Naive thymus-derived CD4-positive, alpha-beta T cell (primary cell): ENCODE measurements at regions of chr10 and their contacts with region 1.

Region 1: GRCh38 chr10:88152720-88153119 is 289.3 kb downstream of the PTEN start:
- DNase-seq: peak in 5 of 9 donors; percentile 3 to 38 (median 10)
- ATAC-seq: peak; percentile 66
- H3K4me3 ChIP-seq: no peak overlapping the region
- H3K4me3 Mint-ChIP-seq: peak overlapping the region in 1 of 10 donors; percentile 67
- H3K27ac ChIP-seq: no peak overlapping the region
- H3K27ac Mint-ChIP-seq: peak overlapping the region in 4 of 9 donors; percentile 4 to 91 (median 79)
- H3K4me1 ChIP-seq: no peaks in the 10 kb centered on the region
- H3K4me1 Mint-ChIP-seq: peaks cover 4 to 25% (median 13%) of the 10 kb centered on the region in 7 donors
- H3K27me3 ChIP-seq: no peaks in the 10 kb centered on the region
- H3K27me3 Mint-ChIP-seq: no peaks in the 10 kb centered on the region

Region 2: GRCh38 chr10:86851329-86852207 is 1301.2 kb before region 1 on chr10:
- CTCF ChIA-PET with region 1: no interaction called
- POLR2A ChIA-PET with region 1: no interaction called
- intact Hi-C with region 1: no loop called
- DNase-seq: no peak
- ATAC-seq: no peak
- H3K4me3 ChIP-seq: no peak overlapping the region
- H3K4me3 Mint-ChIP-seq: no peak overlapping the region
- H3K27ac ChIP-seq: no peak overlapping the region
- H3K27ac Mint-ChIP-seq: no peak overlapping the region
- H3K4me1 ChIP-seq: no peaks in the 10 kb centered on the region
- H3K4me1 Mint-ChIP-seq: no peaks in the 10 kb centered on the region
- H3K27me3 ChIP-seq: no peaks in the 10 kb centered on the region
- H3K27me3 Mint-ChIP-seq: no peaks in the 10 kb centered on the region

Region 3: GRCh38 chr10:87531908-87532622 is 620.7 kb before region 1 on chr10:
- CTCF ChIA-PET with region 1: no interaction called
- POLR2A ChIA-PET with region 1: no interaction called
- intact Hi-C with region 1: no loop called
- DNase-seq: no peak
- ATAC-seq: no peak
- H3K4me3 ChIP-seq: no peak overlapping the region
- H3K4me3 Mint-ChIP-seq: no peak overlapping the region
- H3K27ac ChIP-seq: no peak overlapping the region
- H3K27ac Mint-ChIP-seq: peak overlapping the region in 1 of 9 donors; percentile 26
- H3K4me1 ChIP-seq: no peaks in the 10 kb centered on the region
- H3K4me1 Mint-ChIP-seq: peaks cover 2 to 22% (median 12%) of the 10 kb centered on the region in 7 donors
- H3K27me3 ChIP-seq: no peaks in the 10 kb centered on the region
- H3K27me3 Mint-ChIP-seq: no peaks in the 10 kb centered on the region

Region 4: DNA sequence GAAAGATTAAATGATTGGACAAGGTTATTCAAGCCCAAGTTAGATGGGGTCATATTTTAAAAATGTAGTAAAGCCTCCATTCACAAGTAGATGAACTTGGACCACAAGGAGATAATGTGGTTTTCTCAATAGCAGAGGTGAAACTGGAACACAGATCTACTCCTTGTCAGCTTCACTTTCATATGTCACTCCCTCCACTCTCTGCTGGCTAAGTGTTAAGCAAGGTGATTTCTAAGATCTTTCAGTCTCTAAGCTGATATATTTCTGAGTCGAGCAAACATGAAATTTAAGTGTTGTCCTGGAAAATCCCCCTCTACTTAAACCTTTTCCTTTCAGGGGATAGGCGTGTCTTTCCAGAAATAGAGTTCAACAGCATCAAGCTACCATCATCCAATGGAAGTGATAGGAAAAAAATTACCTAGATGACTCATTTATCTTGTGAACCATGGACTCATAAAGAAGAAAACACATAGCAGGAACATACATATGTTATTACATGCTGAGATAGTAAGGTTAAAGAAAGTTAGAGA is 14.3 kb before region 1 on chr10:
- CTCF ChIA-PET with region 1: no interaction called
- POLR2A ChIA-PET with region 1: no interaction called
- intact Hi-C with region 1: loop called in 1 of 2 experiments (anchors 2 kb)
- DNase-seq: no peak
- ATAC-seq: no peak
- H3K4me3 ChIP-seq: no peak overlapping the region
- H3K4me3 Mint-ChIP-seq: peak overlapping the region in 1 of 10 donors; percentile 40
- H3K27ac ChIP-seq: no peak overlapping the region
- H3K27ac Mint-ChIP-seq: no peak overlapping the region
- H3K4me1 ChIP-seq: no peaks in the 10 kb centered on the region
- H3K4me1 Mint-ChIP-seq: peaks cover 0 to 20% (median 0%) of the 10 kb centered on the region in 7 donors
- H3K27me3 ChIP-seq: no peaks in the 10 kb centered on the region
- H3K27me3 Mint-ChIP-seq: peaks cover 0 to 17% (median 0%) of the 10 kb centered on the region in 5 donors

Region 5: GRCh38 chr10:88170628-88171027 is 17.9 kb after region 1 on chr10:
- CTCF ChIA-PET with region 1: no interaction called
- POLR2A ChIA-PET with region 1: no interaction called
- intact Hi-C with region 1: loop called in 1 of 2 experiments (anchors 2 kb)
- DNase-seq: no peak
- ATAC-seq: no peak
- H3K4me3 ChIP-seq: no peak overlapping the region
- H3K4me3 Mint-ChIP-seq: peak overlapping the region in 2 of 10 donors; percentile 18 to 51
- H3K27ac ChIP-seq: no peak overlapping the region
- H3K27ac Mint-ChIP-seq: peak overlapping the region in 5 of 9 donors; percentile 20 to 76 (median 42)
- H3K4me1 ChIP-seq: peaks cover 0 to 19% of the 10 kb centered on the region in 2 donors
- H3K4me1 Mint-ChIP-seq: peaks cover 15 to 37% (median 31%) of the 10 kb centered on the region in 7 donors
- H3K27me3 ChIP-seq: no peaks in the 10 kb centered on the region
- H3K27me3 Mint-ChIP-seq: peaks cover 0 to 17% (median 0%) of the 10 kb centered on the region in 5 donors

Region 6: DNA sequence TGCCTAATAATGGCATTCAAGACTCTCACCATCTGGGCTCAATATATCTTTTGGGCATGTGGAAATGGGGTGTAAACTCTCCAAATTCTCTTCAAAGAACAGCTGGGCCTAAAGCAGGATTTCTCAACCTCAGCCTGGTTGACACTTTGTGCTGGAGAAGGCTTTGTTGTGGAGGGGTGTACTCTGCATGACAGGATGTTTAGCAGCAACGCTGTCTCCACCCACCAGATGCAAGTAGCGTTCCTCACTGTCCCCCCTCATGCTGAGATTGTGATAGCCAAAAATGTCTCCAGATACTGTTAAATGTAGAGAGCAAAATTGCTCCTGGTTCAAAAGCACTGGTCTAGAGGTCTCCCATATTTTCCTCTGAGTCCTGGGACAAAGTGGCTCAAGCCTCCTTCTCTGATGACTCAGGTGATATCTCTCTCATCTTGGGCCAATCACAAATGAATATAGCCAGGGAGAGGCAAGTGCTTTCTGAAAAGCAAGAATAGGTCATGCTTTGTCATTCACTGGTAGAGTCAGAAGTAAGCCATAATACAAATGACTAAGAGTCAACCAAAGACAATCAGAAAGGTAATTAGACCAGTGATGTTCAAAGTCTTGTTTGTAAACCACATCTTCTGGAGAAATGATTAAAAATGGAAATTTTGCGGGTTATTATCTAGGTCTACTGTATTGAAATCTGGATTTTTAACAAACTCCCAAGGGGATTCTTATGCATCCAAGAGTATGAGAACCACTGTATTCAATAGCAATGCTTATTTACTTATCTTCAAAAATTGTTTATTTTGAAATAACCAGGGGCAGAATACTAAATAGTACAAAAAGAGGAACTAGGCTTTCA is 41.5 kb after region 1 on chr10:
- CTCF ChIA-PET with region 1: no interaction called
- POLR2A ChIA-PET with region 1: no interaction called
- intact Hi-C with region 1: loop called in 1 of 2 experiments (anchors 2 kb)
- DNase-seq: peak in 8 of 9 donors; percentile 24 to 83 (median 72)
- ATAC-seq: peak; percentile 98
- H3K4me3 ChIP-seq: peak overlapping the region; percentile 9
- H3K4me3 Mint-ChIP-seq: peak overlapping the region; percentile 61 to 80 (median 72)
- H3K27ac ChIP-seq: peak overlapping the region; percentile 53
- H3K27ac Mint-ChIP-seq: peak overlapping the region; percentile 72 to 94 (median 89)
- H3K4me1 ChIP-seq: peaks cover 32% of the 10 kb centered on the region in 2 donors
- H3K4me1 Mint-ChIP-seq: peaks cover 21 to 71% (median 52%) of the 10 kb centered on the region in 7 donors
- H3K27me3 ChIP-seq: no peaks in the 10 kb centered on the region
- H3K27me3 Mint-ChIP-seq: peaks cover 0 to 2% (median 0%) of the 10 kb centered on the region in 5 donors

Region 7: DNA sequence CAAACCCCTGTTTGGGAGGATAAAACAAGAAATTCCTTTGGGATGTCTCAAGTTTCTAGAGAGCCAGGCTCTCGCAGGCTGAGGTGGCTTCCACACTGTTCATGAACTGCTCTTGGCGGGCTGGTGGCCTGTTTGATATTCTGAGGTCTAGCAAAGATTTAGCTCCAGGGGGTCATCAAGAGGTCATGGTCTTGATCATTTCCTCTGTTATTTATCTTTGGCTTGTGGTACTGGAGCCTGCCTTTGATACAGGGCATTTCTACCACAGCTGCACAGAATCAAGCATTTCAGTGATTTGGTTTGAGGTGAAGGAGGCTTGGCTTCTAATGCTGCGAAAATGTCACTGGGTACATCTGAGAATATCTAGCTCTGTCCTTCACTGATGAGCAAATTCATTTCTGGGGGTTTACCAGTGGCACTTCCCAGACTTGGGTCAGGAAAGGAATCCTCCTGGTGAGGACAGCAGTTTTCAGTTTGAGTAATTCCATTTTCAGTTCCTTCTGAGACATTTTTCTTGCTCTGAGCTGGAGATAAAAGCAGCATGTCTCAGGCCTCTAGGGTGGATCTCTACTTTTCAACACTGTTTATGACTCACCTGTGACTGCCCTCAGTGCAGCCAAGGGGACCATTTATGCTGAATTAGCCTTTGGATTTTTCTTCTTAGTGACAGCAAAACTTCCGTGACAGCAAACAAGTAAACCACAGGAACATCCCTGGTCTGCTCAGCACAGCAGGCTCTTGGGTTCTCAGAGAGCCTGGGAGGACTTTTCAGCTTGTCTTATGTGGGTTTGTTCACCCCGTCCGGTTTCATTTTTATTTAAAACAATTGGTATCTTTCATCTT is 118.4 kb after region 1 on chr10:
- CTCF ChIA-PET with region 1: no interaction called
- POLR2A ChIA-PET with region 1: no interaction called
- intact Hi-C with region 1: loop called in 1 of 2 experiments (anchors 2 kb)
- DNase-seq: peak in 7 of 9 donors; percentile 8 to 54 (median 26)
- ATAC-seq: peak; percentile 79
- H3K4me3 ChIP-seq: peak overlapping the region; percentile 12
- H3K4me3 Mint-ChIP-seq: peak overlapping the region; percentile 29 to 78 (median 66)
- H3K27ac ChIP-seq: peak overlapping the region; percentile 33
- H3K27ac Mint-ChIP-seq: peak overlapping the region; percentile 44 to 89 (median 83)
- H3K4me1 ChIP-seq: peaks cover 13 to 18% of the 10 kb centered on the region in 2 donors
- H3K4me1 Mint-ChIP-seq: peaks cover 23 to 65% (median 38%) of the 10 kb centered on the region in 7 donors
- H3K27me3 ChIP-seq: no peaks in the 10 kb centered on the region
- H3K27me3 Mint-ChIP-seq: peaks cover 0 to 8% (median 0%) of the 10 kb centered on the region in 5 donors